PC-9 (cell line): ENCODE measurements at regions of chr6 and their contacts with region 1.

Region 1: GRCh38 chr6:10323018-10323760 is 91.7 kb downstream of the TFAP2A start:
- DNase-seq: no peak
- H3K4me3 ChIP-seq: no peak overlapping the region
- H3K27ac ChIP-seq: no peak overlapping the region
- H3K4me1 ChIP-seq: no peaks in the 10 kb centered on the region
- H3K27me3 ChIP-seq: no peaks in the 10 kb centered on the region
- CTCF ChIP-seq: no peak

Region 2: DNA sequence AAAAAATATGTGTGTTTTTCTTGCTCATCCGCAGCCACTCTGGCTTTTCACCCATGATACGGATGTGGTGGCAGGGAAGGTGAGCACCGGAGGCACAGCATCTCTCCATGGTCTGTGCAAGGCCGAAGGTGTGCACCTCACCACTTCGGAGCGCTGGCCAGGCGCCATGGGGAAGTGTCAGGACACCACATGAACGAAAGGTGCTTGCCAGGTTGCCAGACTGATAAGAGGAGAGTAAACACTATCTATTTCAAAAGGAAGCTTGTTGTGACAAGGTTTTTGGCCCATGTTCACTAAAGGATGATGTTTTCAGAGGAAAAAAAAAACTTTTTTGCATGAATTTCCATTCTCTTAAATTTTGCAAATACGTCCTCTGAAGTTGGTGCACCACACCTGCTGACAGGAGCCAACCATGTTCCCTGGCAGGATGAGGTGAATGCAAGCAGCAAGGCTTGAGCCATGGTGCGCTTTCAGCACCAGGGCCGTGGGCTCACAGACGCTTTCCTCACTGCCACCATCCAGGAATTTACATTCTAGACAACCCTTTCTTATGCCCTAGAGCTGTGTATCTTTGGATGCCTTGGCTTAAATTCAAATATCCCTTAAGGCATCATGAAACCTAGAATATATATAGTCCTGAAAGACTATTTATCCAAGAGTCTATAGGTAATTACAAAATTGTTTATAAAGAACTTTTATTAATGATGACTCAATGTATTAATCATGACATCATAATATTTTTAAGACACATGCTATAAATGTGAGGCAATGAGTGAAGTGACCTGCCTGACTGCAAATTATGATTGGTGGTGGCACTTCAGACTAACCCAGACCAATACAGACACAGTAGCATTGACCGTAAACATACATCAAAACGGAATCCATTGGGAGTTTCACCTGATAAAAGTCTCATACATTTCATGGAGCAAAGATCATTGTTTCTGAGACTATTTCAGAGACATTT is 142.8 kb before region 1 on chr6:
- CTCF ChIA-PET with region 1: interaction called, 15 read pairs
- POLR2A ChIA-PET with region 1: no interaction called
- intact Hi-C with region 1: no loop called
- DNase-seq: peak in 1 of 2 experiments; percentile 22
- H3K4me3 ChIP-seq: no peak overlapping the region
- H3K27ac ChIP-seq: no peak overlapping the region
- H3K4me1 ChIP-seq: peaks cover 7% of the 10 kb centered on the region
- H3K27me3 ChIP-seq: no peaks in the 10 kb centered on the region
- CTCF ChIP-seq: no peak